ENCODE measurements at regions of chr3 and their contacts with region 1.

Region 1: DNA sequence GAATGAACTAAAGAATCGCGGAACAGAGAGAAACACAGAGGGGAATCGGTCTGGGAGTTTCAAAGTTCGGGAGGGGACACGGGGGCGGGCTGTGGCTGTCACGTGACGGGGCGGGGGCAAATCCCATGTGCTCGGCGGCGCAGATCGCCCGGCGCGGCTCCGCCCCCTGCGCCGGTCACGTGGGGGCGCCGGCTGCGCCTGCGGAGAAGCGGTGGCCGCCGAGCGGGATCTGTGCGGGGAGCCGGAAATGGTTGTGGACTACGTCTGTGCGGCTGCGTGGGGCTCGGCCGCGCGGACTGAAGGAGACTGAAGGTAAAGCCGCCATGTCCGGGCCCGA is at the start of gene EIF4G1:
- DNase-seq: peak; percentile 95
- ATAC-seq: peak; percentile 72
- H3K4me3 ChIP-seq: peak within 1 kb of the TSS; percentile 100
- H3K27ac ChIP-seq: peak within 1 kb of the TSS; percentile 90
- H3K4me1 ChIP-seq: peaks cover 30% of the 10 kb centered on the region
- H3K27me3 ChIP-seq: no peaks in the 10 kb centered on the region
- CTCF ChIP-seq: no peak
- total RNA-seq, gene EIF4G1: 463 and 599 TPM in 2 replicates

Region 2: GRCh38 chr3:184174646-184175492 is 139.5 kb before region 1 on chr3 and contains the start of gene AP2M1:
- CTCF ChIA-PET with region 1: no interaction called
- POLR2A ChIA-PET with region 1: interaction called, 25 read pairs
- intact Hi-C with region 1: no loop called
- DNase-seq: peak; percentile 99
- ATAC-seq: peak; percentile 86
- H3K4me3 ChIP-seq: peak within 1 kb of the TSS; percentile 89
- H3K27ac ChIP-seq: peak within 1 kb of the TSS; percentile 62
- H3K4me1 ChIP-seq: peaks cover 54% of the 10 kb centered on the region
- H3K27me3 ChIP-seq: no peaks in the 10 kb centered on the region
- CTCF ChIP-seq: peak; percentile 19; the same call in 1 of the 2 replicates
- total RNA-seq, gene AP2M1: 522 and 538 TPM in 2 replicates

Region 3: GRCh38 chr3:184298759-184299496 is 15.4 kb before region 1 on chr3 and contains the start of gene PSMD2:
- CTCF ChIA-PET with region 1: no interaction called
- POLR2A ChIA-PET with region 1: no interaction called
- intact Hi-C with region 1: loop called (anchors 1 kb)
- DNase-seq: peak; percentile 97
- ATAC-seq: peak; percentile 89
- H3K4me3 ChIP-seq: peak within 1 kb of the TSS; percentile 100
- H3K27ac ChIP-seq: peak within 1 kb of the TSS; percentile 80
- H3K4me1 ChIP-seq: peaks cover 20% of the 10 kb centered on the region
- H3K27me3 ChIP-seq: no peaks in the 10 kb centered on the region
- CTCF ChIP-seq: no peak
- total RNA-seq, gene PSMD2: 1,057 and 1,393 TPM in 2 replicates

Region 4: GRCh38 chr3:184335661-184336546 is 21.6 kb after region 1 on chr3:
- CTCF ChIA-PET with region 1: no interaction called
- POLR2A ChIA-PET with region 1: no interaction called
- intact Hi-C with region 1: loop called (anchors 2 kb)
- DNase-seq: peak; percentile 75
- ATAC-seq: peak; percentile 49
- H3K4me3 ChIP-seq: peak overlapping the region; percentile 71
- H3K27ac ChIP-seq: peak overlapping the region; percentile 95
- H3K4me1 ChIP-seq: peaks cover 62% of the 10 kb centered on the region
- H3K27me3 ChIP-seq: no peaks in the 10 kb centered on the region
- CTCF ChIP-seq: no peak

Region 5: DNA sequence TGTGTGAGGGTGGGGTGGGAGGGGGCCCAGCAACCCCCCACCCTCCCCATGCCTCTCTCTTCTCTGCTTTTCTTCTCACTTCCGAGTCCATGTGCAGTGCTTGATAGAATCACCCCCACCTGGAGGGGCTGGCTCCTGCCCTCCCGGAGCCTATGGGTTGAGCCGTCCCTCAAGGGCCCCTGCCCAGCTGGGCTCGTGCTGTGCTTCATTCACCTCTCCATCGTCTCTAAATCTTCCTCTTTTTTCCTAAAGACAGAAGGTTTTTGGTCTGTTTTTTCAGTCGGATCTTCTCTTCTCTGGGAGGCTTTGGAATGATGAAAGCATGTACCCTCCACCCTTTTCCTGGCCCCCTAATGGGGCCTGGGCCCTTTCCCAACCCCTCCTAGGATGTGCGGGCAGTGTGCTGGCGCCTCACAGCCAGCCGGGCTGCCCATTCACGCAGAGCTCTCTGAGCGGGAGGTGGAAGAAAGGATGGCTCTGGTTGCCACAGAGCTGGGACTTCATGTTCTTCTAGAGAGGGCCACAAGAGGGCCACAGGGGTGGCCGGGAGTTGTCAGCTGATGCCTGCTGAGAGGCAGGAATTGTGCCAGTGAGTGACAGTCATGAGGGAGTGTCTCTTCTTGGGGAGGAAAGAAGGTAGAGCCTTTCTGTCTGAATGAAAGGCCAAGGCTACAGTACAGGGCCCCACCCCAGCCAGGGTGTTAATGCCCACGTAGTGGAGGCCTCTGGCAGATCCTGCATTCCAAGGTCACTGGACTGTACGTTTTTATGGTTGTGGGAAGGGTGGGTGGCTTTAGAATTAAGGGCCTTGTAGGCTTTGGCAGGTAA is 31.2 kb after region 1 on chr3:
- CTCF ChIA-PET with region 1: no interaction called
- POLR2A ChIA-PET with region 1: no interaction called
- intact Hi-C with region 1: loop called (anchors 5 kb)
- DNase-seq: peak; percentile 86
- ATAC-seq: peak; percentile 96
- H3K4me3 ChIP-seq: no peak overlapping the region
- H3K27ac ChIP-seq: no peak overlapping the region
- H3K4me1 ChIP-seq: peaks cover 3% of the 10 kb centered on the region; the same call in 1 of the 2 replicates
- H3K27me3 ChIP-seq: no peaks in the 10 kb centered on the region
- CTCF ChIP-seq: peak; percentile 82

Region 6: DNA sequence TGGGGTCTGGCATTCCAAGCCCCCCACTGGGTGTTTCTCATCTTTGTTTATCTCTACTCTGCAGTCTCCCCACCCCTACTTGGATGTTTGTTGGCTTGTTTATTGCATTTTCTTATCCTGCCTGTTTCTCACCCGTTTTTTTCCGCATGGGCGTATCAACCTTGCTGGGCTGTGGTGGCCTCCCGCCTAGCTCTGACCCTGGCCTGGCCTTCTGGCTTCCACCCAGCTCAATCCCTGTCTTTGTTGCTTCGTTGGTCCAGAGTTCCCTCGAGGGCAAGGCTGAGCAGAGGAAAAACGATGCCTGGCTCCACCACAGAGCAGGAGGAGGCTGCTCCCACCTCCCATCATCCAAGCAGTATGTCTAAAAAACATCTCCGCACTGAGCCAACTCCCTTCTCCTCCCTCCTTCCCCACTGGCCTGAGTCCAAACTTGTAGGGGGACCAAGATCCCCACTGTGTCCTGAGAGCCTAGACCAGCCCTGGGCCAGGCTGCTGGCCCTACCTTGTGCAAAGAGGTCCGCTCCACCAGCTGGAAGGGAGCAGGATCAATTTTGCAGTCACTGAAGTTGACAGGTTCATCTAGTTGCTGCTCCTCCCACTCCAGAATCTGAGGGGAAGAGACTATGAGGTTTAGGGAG is 37.3 kb after region 1 on chr3:
- CTCF ChIA-PET with region 1: no interaction called
- POLR2A ChIA-PET with region 1: interaction called, 19 read pairs
- intact Hi-C with region 1: loop called (anchors 5 kb)
- DNase-seq: no peak
- ATAC-seq: no peak
- H3K4me3 ChIP-seq: no peak overlapping the region
- H3K27ac ChIP-seq: no peak overlapping the region
- H3K4me1 ChIP-seq: no peaks in the 10 kb centered on the region
- H3K27me3 ChIP-seq: no peaks in the 10 kb centered on the region
- CTCF ChIP-seq: no peak

Measured in PC-3 (cell line).